Colonic mucosa (tissue), 4 donors: ENCODE measurements at regions of chr12 and their contacts with region 1.

Region 1: GRCh38 chr12:1583421-1584078 is 10.8 kb downstream of the FBXL14 start:
- DNase-seq: peak; percentile 88
- H3K4me3 ChIP-seq: no peak overlapping the region
- H3K27ac ChIP-seq: no peak overlapping the region
- H3K4me1 ChIP-seq: peaks cover 3% of the 10 kb centered on the region
- H3K27me3 ChIP-seq: no peaks in the 10 kb centered on the region
- CTCF ChIP-seq: peak; percentile 82

Region 2: GRCh38 chr12:949453-950191 is 633.9 kb before region 1 on chr12 and contains the start of gene RAD52:
- intact Hi-C with region 1: no loop called
- DNase-seq: peak; percentile 98
- H3K4me3 ChIP-seq: peak within 1 kb of the TSS; percentile 84
- H3K27ac ChIP-seq: peak within 1 kb of the TSS; percentile 98
- H3K4me1 ChIP-seq: no peaks in the 10 kb centered on the region
- H3K27me3 ChIP-seq: no peaks in the 10 kb centered on the region
- CTCF ChIP-seq: peak; percentile 98
- total RNA-seq, gene RAD52: 19.4 to 28.8 TPM

Region 3: GRCh38 chr12:1117970-1118563 is 465.5 kb before region 1 on chr12:
- intact Hi-C with region 1: loop called (anchors 2 kb)
- DNase-seq: peak; percentile 71
- H3K4me3 ChIP-seq: no peak overlapping the region
- H3K27ac ChIP-seq: no peak overlapping the region
- H3K4me1 ChIP-seq: no peaks in the 10 kb centered on the region
- H3K27me3 ChIP-seq: no peaks in the 10 kb centered on the region
- CTCF ChIP-seq: peak; percentile 88

Region 4: GRCh38 chr12:1282670-1283335 is 300.7 kb before region 1 on chr12:
- intact Hi-C with region 1: loop called (anchors 10 kb)
- DNase-seq: peak; percentile 35
- H3K4me3 ChIP-seq: no peak overlapping the region
- H3K27ac ChIP-seq: no peak overlapping the region
- H3K4me1 ChIP-seq: no peaks in the 10 kb centered on the region
- H3K27me3 ChIP-seq: no peaks in the 10 kb centered on the region
- CTCF ChIP-seq: no peak

Region 5: GRCh38 chr12:1500095-1500801 is 83.3 kb before region 1 on chr12:
- intact Hi-C with region 1: no loop called
- DNase-seq: peak; percentile 37
- H3K4me3 ChIP-seq: no peak overlapping the region
- H3K27ac ChIP-seq: no peak overlapping the region
- H3K4me1 ChIP-seq: peaks cover 3% of the 10 kb centered on the region
- H3K27me3 ChIP-seq: no peaks in the 10 kb centered on the region
- CTCF ChIP-seq: no peak